ENCODE measurements at regions of chr15 and their contacts with region 1.

Region 1: DNA sequence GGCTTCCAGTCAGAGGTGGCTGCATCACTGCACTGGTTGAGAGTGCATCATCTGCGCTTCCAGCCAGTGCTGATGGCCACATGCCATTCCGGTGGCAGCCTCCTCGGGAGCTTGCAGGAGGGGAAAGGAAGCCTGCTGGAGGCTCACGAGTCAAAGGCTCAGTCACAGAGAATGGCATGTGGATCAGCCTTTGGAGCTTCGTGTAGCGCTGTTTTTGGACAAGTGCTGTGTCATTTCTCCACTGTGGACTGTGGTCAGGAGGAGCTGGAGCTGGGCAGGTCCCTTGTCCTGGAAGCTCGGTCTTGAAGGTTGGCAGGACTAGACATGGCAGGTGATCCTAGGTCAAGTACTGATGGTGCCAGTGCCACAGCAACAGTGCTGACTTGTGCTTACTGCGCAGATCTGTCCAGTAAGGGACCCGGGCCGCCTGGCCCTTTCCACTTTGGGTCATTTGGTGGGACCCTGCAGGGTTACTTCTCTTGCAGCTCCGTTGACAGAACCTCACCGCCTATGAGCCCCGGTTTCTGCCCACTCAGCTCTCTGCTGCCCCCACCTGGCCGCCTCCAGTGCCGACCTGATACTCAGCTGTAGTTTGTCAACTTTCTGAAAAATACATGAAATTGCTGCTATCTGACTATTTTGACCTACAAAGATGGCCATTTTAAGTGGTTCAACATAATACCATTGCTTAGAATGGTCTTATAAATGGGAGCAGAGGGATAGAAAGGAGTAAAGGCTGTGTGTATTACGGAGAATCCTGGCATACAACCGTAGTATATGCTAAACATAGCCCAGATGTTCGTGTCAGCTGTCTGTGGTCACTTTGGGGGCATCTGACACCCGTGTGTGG is 27.6 kb upstream of the TRPM1 start:
- DNase-seq: peak; percentile 79
- H3K4me3 Mint-ChIP-seq: no peak overlapping the region
- H3K27ac Mint-ChIP-seq: no peak overlapping the region
- H3K4me1 Mint-ChIP-seq: no peaks in the 10 kb centered on the region
- H3K27me3 Mint-ChIP-seq: no peaks in the 10 kb centered on the region

Region 2: GRCh38 chr15:30859091-30859874 is 269.9 kb before region 1 on chr15:
- CTCF ChIA-PET with region 1: interaction called, 11 read pairs
- POLR2A ChIA-PET with region 1: no interaction called
- DNase-seq: no peak
- H3K4me3 Mint-ChIP-seq: no peak overlapping the region
- H3K27ac Mint-ChIP-seq: no peak overlapping the region
- H3K4me1 Mint-ChIP-seq: no peaks in the 10 kb centered on the region
- H3K27me3 Mint-ChIP-seq: peaks cover 3% of the 10 kb centered on the region

Region 3: DNA sequence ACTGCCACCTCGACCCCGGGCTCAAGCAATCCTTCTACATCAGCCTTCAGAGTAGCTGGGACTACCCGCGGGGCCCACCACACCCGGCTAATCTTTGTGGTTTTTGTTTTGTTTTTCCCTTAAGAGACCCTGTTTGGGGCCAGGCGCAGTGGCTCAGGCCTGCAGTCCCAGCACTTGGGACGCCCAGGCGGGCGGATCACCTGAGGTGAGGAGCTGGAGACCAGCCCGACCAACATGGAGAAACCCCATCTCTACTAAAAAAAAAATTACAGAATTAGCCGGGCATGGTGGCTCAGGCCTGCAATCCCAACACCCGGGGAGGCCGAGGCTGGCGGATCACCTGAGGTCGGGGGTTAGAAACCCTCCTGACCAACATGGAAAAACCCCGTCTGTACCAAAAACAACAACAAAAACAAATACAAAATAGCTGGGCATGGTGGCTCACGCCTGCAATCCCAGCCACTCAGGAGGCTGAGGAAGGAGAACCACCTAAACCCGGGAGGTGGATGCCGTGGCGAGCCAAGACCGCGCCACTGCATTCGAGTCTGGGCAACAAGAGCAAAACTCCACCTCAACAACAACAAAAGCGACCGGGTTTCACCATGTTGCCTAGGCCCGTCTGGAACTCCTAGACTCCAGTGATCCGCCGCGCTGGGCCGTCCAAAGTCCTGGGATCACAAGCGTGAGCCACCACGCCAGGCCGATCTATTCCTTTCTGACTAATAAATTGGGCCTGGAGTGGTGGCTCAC is 233.5 kb before region 1 on chr15:
- CTCF ChIA-PET with region 1: interaction called, 10 read pairs
- POLR2A ChIA-PET with region 1: no interaction called
- DNase-seq: no peak
- H3K4me3 Mint-ChIP-seq: no peak overlapping the region
- H3K27ac Mint-ChIP-seq: no peak overlapping the region
- H3K4me1 Mint-ChIP-seq: peaks cover 5% of the 10 kb centered on the region
- H3K27me3 Mint-ChIP-seq: peaks cover 8% of the 10 kb centered on the region

Region 4: DNA sequence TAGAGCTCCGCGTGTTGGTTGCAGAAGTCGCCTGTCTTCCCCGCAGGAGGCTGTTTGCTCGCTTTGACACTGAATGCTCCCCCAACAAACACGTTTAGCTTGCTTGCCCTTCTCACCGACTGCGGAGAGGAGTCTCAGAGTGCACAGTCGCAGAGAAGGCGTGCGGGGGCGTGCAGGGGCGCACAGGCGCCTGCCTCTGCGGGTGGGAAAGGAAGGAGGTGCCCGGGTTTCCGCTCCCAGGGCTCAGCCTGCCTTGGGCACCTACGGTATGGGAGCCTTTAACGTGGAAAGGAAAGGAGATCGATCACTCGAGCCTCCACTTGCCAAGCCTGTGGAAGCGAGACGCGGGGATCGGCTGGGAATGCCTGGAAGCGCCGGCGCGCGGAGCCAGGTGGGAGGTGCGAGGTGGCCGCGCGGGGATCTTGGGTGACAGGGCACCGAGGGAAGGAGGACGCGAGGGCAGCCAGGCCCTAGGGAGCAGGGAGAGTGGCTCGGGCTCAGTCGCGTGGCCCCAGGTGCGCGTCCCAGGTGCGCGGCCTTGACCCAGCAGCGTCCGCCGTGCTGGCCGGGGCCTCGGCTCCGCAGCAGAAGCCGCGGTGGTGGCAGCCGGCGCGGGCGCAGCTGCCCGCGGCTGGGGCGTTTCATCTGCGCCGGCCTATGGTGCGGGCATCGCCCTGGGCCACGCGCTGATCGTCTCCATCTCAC is 225.5 kb before region 1 on chr15 and contains the start of gene FAN1:
- CTCF ChIA-PET with region 1: interaction called, 16 read pairs
- POLR2A ChIA-PET with region 1: no interaction called
- DNase-seq: peak; percentile 82
- H3K4me3 Mint-ChIP-seq: peak within 1 kb of the TSS; percentile 83
- H3K27ac Mint-ChIP-seq: peak within 1 kb of the TSS; percentile 16
- H3K4me1 Mint-ChIP-seq: peaks cover 22% of the 10 kb centered on the region
- H3K27me3 Mint-ChIP-seq: peaks cover 13% of the 10 kb centered on the region
- total RNA-seq, gene FAN1: 10.1 to 10.4 TPM

Region 5: DNA sequence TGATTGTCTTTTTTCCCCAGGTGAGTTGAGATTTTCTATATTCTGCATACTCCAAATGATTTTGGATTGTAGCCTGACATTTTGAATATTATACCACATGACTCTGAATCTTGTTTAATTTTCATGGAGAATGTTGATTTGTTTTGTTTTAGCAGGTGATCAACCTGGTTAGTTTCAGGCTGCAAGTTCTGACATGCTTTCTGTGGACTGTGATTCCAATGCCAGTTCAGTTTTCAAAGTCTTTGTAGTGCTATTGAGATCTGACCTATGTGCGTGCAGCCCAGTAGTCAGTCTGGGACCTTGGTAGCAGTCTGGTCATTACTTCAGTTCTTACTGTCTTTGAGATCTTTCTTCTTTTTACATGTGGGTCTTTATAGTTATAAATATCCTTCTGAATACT is 119.1 kb before region 1 on chr15:
- CTCF ChIA-PET with region 1: no interaction called
- POLR2A ChIA-PET with region 1: no interaction called
- DNase-seq: no peak
- H3K4me3 Mint-ChIP-seq: no peak overlapping the region
- H3K27ac Mint-ChIP-seq: no peak overlapping the region
- H3K4me1 Mint-ChIP-seq: peaks cover 33% of the 10 kb centered on the region
- H3K27me3 Mint-ChIP-seq: peaks cover 52% of the 10 kb centered on the region

Region 6: GRCh38 chr15:31031471-31032067 is 97.6 kb before region 1 on chr15:
- CTCF ChIA-PET with region 1: no interaction called
- POLR2A ChIA-PET with region 1: no interaction called
- DNase-seq: no peak
- H3K4me3 Mint-ChIP-seq: no peak overlapping the region
- H3K27ac Mint-ChIP-seq: no peak overlapping the region
- H3K4me1 Mint-ChIP-seq: peaks cover 10% of the 10 kb centered on the region
- H3K27me3 Mint-ChIP-seq: peaks cover 23% of the 10 kb centered on the region

Region 7: DNA sequence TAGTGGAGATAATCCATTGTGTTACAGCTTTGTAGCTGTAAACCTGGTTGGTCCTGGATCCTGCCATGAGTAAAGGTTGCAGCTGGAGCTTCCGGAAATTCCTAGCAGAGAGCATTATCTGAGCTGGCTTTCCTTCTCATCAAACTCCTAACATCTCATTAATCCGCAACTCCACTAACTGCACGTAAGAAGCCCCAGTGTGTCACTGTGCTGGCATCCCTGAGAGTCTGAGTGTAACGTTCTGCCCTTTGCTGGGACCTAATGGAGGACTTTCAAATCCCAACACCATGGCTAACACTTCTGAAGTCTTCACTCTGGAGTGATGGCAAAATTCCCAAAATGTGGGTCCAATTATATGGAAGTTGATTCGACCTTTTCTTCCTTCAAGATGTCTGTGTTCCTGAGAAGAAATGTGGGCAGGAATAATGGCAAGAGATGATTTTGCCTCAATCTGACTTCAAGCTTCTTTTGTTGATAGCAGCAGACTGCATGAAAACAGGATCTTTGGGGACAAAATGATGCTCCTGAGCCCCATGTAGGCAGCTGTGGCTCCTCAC is 18.0 kb before region 1 on chr15:
- CTCF ChIA-PET with region 1: interaction called, 12 read pairs
- POLR2A ChIA-PET with region 1: no interaction called
- DNase-seq: no peak
- H3K4me3 Mint-ChIP-seq: no peak overlapping the region
- H3K27ac Mint-ChIP-seq: no peak overlapping the region
- H3K4me1 Mint-ChIP-seq: no peaks in the 10 kb centered on the region
- H3K27me3 Mint-ChIP-seq: peaks cover 18% of the 10 kb centered on the region

Measured in activated CD4-positive, alpha-beta memory T cell treated with anti-CD3 and anti-CD28 coated beads, Interleukin-2, amount 10 ng/mL, durations not matched to agents 7 days and 5 days (primary cell).